ENCODE measurements at regions of chr19 and their contacts with region 1.

Region 1: GRCh38 chr19:8355631-8356402 is 8.1 kb upstream of the ANGPTL4 start:
- DNase-seq: no peak
- H3K4me3 Mint-ChIP-seq: no peak overlapping the region
- H3K27ac Mint-ChIP-seq: peak overlapping the region; percentile 47
- H3K4me1 Mint-ChIP-seq: peaks cover 13% of the 10 kb centered on the region
- H3K27me3 Mint-ChIP-seq: peaks cover 16% of the 10 kb centered on the region

Region 2: GRCh38 chr19:8269724-8270123 is 86.1 kb before region 1 on chr19:
- intact Hi-C with region 1: no loop called
- DNase-seq: peak; percentile 6
- H3K4me3 Mint-ChIP-seq: peak overlapping the region; percentile 74
- H3K27ac Mint-ChIP-seq: peak overlapping the region; percentile 82
- H3K4me1 Mint-ChIP-seq: peaks cover 13% of the 10 kb centered on the region
- H3K27me3 Mint-ChIP-seq: no peaks in the 10 kb centered on the region

Region 3: GRCh38 chr19:8396563-8397203 is 40.9 kb after region 1 on chr19:
- intact Hi-C with region 1: loop called (anchors 1 kb)
- DNase-seq: peak; percentile 69
- H3K4me3 Mint-ChIP-seq: no peak overlapping the region
- H3K27ac Mint-ChIP-seq: peak overlapping the region; percentile 10
- H3K4me1 Mint-ChIP-seq: peaks cover 16% of the 10 kb centered on the region
- H3K27me3 Mint-ChIP-seq: no peaks in the 10 kb centered on the region

Measured in activated T-helper 2 cell treated with anti-CD3 and anti-CD28 coated beads, Interferon-gamma antibody, Interleukin-2, Interleukin-4, amounts not matched to agents 10 μg/mL and 5 μg/mL and 100 μg/mL, durations not matched to agents 14 hours and 24 hours and 36 hours (primary cell).